ENCODE measurements at regions of chr1 and their contacts with region 1.

Region 1: GRCh38 chr1:181910905-181911304 is 150.6 kb downstream of the ZNF648 start:
- DNase-seq: no peak
- H3K4me3 ChIP-seq: no peak overlapping the region
- H3K27ac ChIP-seq: no peak overlapping the region
- H3K4me1 ChIP-seq: no peaks in the 10 kb centered on the region
- H3K27me3 ChIP-seq: no peaks in the 10 kb centered on the region
- CTCF ChIP-seq: peak in 2 of 3 experiments; percentile 30 to 56; a peak in 2 of 4 replicates
- EP300 ChIP-seq: no peak
- POLR2A ChIP-seq: no peak
- RAD21 ChIP-seq: peak; percentile 26 to 41; a peak in 1 of 4 replicates

Region 2: DNA sequence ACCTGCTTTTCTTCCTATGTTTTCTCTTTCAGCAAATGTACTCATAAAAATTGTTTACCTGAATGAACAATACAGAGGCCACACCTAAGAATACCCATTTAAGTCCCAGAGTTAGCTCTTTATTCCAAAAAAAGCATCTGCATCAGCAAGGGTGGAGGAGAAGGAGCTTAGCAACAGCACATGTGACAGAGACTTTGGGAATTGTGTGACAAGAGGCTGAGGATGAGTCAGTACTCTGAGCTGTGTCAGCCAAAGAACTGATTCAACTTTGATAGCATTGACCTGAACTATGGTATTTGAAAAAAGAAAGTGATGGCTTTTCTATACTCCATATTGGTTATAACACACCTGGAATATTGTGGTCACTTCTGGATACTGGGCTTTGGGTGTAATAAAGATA is 12.1 kb before region 1 on chr1:
- CTCF ChIA-PET with region 1: interaction called, 10 read pairs
- POLR2A ChIA-PET with region 1: no interaction called
- DNase-seq: no peak
- H3K4me3 ChIP-seq: no peak overlapping the region
- H3K27ac ChIP-seq: no peak overlapping the region
- H3K4me1 ChIP-seq: no peaks in the 10 kb centered on the region
- H3K27me3 ChIP-seq: no peaks in the 10 kb centered on the region
- CTCF ChIP-seq: no peak
- EP300 ChIP-seq: no peak
- POLR2A ChIP-seq: no peak
- RAD21 ChIP-seq: no peak

Region 3: GRCh38 chr1:181985936-181986906 is 75.3 kb after region 1 on chr1:
- CTCF ChIA-PET with region 1: no interaction called
- POLR2A ChIA-PET with region 1: no interaction called
- DNase-seq: no peak
- H3K4me3 ChIP-seq: no peak overlapping the region
- H3K27ac ChIP-seq: no peak overlapping the region
- H3K4me1 ChIP-seq: peaks cover 0 to 7% (median 4%) of the 10 kb centered on the region in 4 experiments; a peak in 5 of 7 replicates
- H3K27me3 ChIP-seq: no peaks in the 10 kb centered on the region
- CTCF ChIP-seq: no peak
- EP300 ChIP-seq: no peak
- POLR2A ChIP-seq: no peak
- RAD21 ChIP-seq: no peak

Region 4: DNA sequence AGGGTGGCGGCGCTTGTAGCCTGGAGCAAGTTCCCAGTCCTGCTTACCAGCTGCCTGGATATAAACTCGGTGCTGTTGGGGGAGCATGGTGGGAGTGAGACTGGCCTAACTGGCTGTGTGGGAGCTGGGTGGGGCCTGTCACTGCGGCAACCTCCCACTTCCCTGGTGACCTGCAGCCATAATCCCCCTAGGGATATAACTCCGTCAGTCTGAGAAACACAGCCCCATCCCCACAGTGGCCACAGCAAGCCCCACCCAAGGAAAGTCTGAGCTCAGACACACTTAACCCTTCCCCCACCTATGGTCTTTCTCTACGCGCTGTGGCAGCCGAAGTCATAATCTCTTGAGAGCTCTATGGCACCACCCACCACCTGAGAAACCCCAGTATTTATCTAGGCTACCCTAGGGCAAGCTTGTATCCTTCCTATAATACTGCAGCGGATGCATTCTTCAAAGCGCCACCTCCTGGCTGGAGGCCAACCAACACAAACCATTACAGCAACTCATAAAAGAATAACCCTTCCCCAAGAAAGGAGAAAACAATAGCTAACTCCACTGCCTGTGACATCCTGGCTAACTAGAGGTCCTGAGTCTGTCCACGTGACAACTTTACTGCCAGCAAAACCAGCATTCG is 93.2 kb after region 1 on chr1:
- CTCF ChIA-PET with region 1: no interaction called
- POLR2A ChIA-PET with region 1: no interaction called
- DNase-seq: no peak
- H3K4me3 ChIP-seq: no peak overlapping the region
- H3K27ac ChIP-seq: no peak overlapping the region
- H3K4me1 ChIP-seq: peaks cover 0 to 4% (median 2%) of the 10 kb centered on the region in 4 experiments; a peak in 3 of 7 replicates
- H3K27me3 ChIP-seq: no peaks in the 10 kb centered on the region
- CTCF ChIP-seq: peak; percentile 7 to 51 (median 37); a peak in 2 of 4 replicates
- EP300 ChIP-seq: no peak
- POLR2A ChIP-seq: no peak
- RAD21 ChIP-seq: peak; percentile 13 to 36; a peak in 3 of 4 replicates

Measured in H1 (cell line).